Esophagus muscularis mucosa (tissue), 4 donors: ENCODE measurements at regions of chr1 and their contacts with region 1.

Region 1: DNA sequence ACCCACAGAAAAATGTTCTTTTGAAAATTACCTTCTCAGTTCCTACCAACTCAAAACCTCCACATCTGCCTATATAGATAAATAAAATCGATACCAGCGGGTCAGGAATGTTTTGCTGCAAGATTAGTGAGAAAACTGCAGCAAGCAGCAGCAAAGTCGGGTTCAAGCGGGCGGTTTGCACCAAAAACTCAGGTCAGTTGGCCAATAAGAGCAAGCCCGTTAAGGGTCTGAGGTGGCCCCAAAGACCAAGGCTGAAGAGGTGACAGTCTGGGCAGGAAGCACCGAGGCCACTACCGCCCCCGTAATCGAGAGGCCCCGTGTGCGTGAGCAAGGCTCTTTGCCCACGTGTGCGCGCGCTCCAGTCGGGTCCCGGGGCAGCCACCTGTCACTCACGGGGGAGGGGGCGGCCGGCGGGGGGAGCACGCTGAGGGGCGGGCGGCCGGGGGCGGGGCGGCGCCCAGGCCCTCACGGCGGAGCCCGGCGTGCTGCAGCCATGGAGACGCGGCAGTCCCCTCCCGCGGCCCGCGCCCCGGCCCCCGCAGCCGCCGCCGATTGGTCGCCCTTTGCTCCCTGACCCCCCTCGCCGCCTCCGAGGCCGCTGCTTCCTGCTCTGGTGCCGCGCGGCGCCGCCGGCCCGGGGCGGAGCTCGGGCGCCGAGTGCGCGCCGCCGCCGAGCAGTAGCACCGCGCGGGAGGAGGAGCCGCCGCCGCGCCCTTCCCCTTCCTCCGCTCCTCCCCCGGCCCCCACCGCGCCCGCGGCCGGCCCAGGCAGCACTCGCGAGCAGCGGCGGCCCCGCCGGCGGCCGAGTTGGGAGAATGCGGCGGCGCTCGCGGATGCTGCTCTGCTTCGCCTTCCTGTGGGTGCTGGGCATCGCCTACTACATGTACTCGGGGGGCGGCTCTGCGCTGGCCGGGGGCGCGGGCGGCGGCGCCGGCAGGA is at the start of gene GALNT2:
- DNase-seq: no peak
- H3K4me3 ChIP-seq: peak within 1 kb of the TSS; percentile 82 to 97 (median 90)
- H3K27ac ChIP-seq: peak within 1 kb of the TSS; percentile 89 to 97 (median 96)
- H3K4me1 ChIP-seq: peaks cover 17 to 50% (median 42%) of the 10 kb centered on the region in 4 donors
- H3K27me3 ChIP-seq: no peaks in the 10 kb centered on the region
- CTCF ChIP-seq: no peak
- EP300 ChIP-seq: no peak
- POLR2A ChIP-seq: peak; percentile 58
- total RNA-seq, gene GALNT2: 89.6 to 145 (median 129) TPM

Region 2: DNA sequence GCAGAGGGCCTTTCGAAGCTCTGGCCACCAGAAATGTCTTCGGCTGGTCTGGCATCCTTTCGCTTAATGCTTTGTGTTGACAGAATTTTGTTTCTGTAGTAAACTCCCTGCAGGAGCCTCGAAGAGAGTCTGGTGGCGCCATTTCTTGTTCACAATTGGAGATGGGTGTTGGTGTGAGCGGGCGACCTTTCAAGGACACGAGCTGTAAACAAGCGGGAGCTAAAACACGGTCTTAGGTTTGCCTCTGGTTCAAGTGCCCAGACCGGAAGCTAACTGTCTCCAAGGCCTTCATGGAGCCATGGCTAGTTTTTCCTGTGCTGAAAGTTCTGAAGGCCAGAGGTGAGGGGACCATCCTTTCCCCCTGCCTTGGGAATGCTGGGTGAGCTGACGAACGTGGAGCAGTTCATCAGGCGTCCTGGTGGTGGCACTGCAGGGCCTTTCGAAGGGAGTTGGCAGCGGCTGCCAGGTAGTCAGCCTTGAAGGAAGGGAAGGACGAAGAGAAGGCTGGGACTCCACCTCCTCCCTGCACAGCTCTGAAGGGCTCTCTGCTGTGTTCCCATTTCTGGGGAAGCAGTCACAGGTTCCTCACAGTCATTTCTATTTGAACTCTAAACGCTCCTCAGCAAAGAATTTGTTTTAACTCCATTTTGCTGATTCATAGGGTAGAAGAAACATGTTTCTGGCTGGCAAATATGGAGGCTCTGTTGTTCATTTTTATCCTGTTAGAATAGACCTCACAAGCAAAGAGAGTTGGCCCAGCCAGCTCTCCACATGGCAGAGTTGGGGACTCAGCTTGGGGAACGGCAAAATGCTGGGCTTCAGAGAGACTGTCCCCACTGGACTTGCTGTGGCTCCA is 405.5 kb before region 1 on chr1:
- intact Hi-C with region 1: loop called (anchors 10 kb)
- DNase-seq: peak; percentile 94
- H3K4me3 ChIP-seq: no peak overlapping the region
- H3K27ac ChIP-seq: no peak overlapping the region
- H3K4me1 ChIP-seq: peaks cover 4 to 27% (median 18%) of the 10 kb centered on the region in 4 donors
- H3K27me3 ChIP-seq: no peaks in the 10 kb centered on the region
- CTCF ChIP-seq: peak; percentile 93 to 95 (median 95)
- EP300 ChIP-seq: no peak
- POLR2A ChIP-seq: no peak

Region 3: GRCh38 chr1:229887043-229887822 is 179.5 kb before region 1 on chr1:
- intact Hi-C with region 1: loop called (anchors 10 kb)
- DNase-seq: peak; percentile 84
- H3K4me3 ChIP-seq: no peak overlapping the region
- H3K27ac ChIP-seq: peak overlapping the region; percentile 73 to 83 (median 78)
- H3K4me1 ChIP-seq: peaks cover 14 to 57% (median 47%) of the 10 kb centered on the region in 4 donors
- H3K27me3 ChIP-seq: no peaks in the 10 kb centered on the region
- CTCF ChIP-seq: no peak
- EP300 ChIP-seq: peak; percentile 31
- POLR2A ChIP-seq: no peak

Region 4: GRCh38 chr1:230104395-230105244 is 37.9 kb after region 1 on chr1:
- intact Hi-C with region 1: loop called (anchors 5 kb)
- DNase-seq: peak; percentile 98
- H3K4me3 ChIP-seq: peak overlapping the region; percentile 17 to 39 (median 22)
- H3K27ac ChIP-seq: peak overlapping the region; percentile 82 to 87 (median 83)
- H3K4me1 ChIP-seq: peaks cover 53 to 100% (median 91%) of the 10 kb centered on the region in 4 donors
- H3K27me3 ChIP-seq: no peaks in the 10 kb centered on the region
- CTCF ChIP-seq: peak in 2 of 3 experiments; percentile 3 to 8
- EP300 ChIP-seq: peak; percentile 90
- POLR2A ChIP-seq: no peak

Region 5: GRCh38 chr1:230186003-230186863 is 119.5 kb after region 1 on chr1:
- intact Hi-C with region 1: loop called (anchors 5 kb)
- DNase-seq: peak; percentile 92
- H3K4me3 ChIP-seq: peak overlapping the region in 2 of 4 donors; percentile 1 to 2
- H3K27ac ChIP-seq: peak overlapping the region; percentile 43 to 70 (median 56)
- H3K4me1 ChIP-seq: peaks cover 24 to 63% (median 59%) of the 10 kb centered on the region in 4 donors
- H3K27me3 ChIP-seq: no peaks in the 10 kb centered on the region
- CTCF ChIP-seq: no peak
- EP300 ChIP-seq: no peak
- POLR2A ChIP-seq: no peak